Left cardiac atrium (tissue), 4 donors: ENCODE measurements at regions of chr17 and their contacts with region 1.

Region 1: GRCh38 chr17:55770148-55770870 is 19.5 kb downstream of the PCTP start:
- DNase-seq: no peak
- ATAC-seq: peak; percentile 71 to 77

Region 2: GRCh38 chr17:55533608-55534007 is 236.7 kb before region 1 on chr17:
- intact Hi-C with region 1: loop called in 1 of 2 experiments (anchors 5 kb)
- DNase-seq: no peak
- ATAC-seq: no peak

Region 3: GRCh38 chr17:55683554-55684315 is 86.6 kb before region 1 on chr17:
- intact Hi-C with region 1: no loop called
- DNase-seq: no peak
- ATAC-seq: no peak

Region 4: GRCh38 chr17:57106107-57106835 is 1336.0 kb after region 1 on chr17:
- intact Hi-C with region 1: no loop called
- DNase-seq: no peak
- ATAC-seq: peak; percentile 9 to 12